ENCODE measurements at regions of chr1 and their contacts with region 1.

Region 1: DNA sequence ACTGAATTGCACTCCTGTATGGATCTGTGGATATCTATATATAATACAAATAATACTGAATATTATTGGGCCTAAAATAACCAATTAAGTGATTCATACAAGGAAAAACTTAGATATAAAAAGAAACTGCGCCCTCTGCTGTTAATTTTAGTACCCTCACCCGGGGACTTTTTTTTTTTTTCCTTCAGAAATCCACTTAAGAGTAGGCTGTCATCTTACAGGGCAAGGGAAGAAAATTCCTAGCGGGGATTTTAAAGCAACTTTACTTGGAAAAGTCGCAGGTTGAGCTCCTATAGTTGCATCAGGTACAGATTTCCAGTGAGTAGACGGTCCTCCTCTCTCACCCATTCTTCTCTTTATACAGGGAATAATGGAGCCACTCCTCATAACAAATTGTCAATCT is 1.3 kb downstream of the NTNG1 start:
- DNase-seq: no peak
- H3K4me3 ChIP-seq: peak overlapping the region; percentile 77 to 85 (median 82); a peak in 7 of 8 replicates
- H3K27ac ChIP-seq: no peak overlapping the region
- H3K4me1 ChIP-seq: peaks cover 0 to 4% (median 0%) of the 10 kb centered on the region in 4 experiments; a peak in 2 of 7 replicates
- H3K27me3 ChIP-seq: no peaks in the 10 kb centered on the region; a peak in 3 of 7 replicates
- CTCF ChIP-seq: peak in 2 of 3 experiments; percentile 24 to 32; a peak in 2 of 4 replicates
- EP300 ChIP-seq: no peak
- POLR2A ChIP-seq: no peak
- RAD21 ChIP-seq: peak; percentile 25 to 39; a peak in 3 of 4 replicates

Region 2: DNA sequence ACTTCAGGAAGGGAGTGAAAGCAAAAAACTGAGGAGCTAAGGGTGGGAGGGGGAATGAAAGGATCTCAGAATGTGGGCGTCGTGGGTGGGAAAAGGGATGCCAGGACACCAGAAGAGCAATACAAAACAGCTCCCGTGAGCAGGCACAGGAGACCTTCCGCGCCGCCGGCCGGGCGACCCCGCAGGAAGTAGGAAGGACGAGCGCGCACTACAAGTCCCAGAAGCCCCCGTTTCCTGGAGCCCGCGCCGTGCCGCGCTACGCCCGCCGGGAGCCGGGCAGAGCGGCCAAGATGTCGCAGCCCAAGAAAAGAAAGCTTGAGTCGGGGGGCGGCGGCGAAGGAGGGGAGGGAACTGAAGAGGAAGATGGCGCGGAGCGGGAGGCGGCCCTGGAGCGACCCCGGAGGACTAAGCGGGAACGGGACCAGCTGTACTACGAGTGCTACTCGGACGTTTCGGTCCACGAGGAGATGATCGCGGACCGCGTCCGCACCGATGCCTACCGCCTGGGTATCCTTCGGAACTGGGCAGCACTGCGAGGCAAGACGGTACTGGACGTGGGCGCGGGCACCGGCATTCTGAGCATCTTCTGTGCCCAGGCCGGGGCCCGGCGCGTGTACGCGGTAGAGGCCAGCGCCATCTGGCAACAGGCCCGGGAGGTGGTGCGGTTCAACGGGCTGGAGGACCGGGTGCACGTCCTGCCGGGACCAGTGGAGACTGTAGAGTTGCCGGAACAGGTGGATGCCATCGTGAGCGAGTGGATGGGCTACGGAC is 85.5 kb before region 1 on chr1 and contains the start of gene PRMT6:
- CTCF ChIA-PET with region 1: interaction called, 6 read pairs
- POLR2A ChIA-PET with region 1: interaction called, 11 read pairs
- DNase-seq: peak; percentile 70 to 88
- H3K4me3 ChIP-seq: peak within 1 kb of the TSS; percentile 85 to 98 (median 96)
- H3K27ac ChIP-seq: peak within 1 kb of the TSS; percentile 88
- H3K4me1 ChIP-seq: peaks cover 0 to 8% (median 0%) of the 10 kb centered on the region in 4 experiments; a peak in 2 of 7 replicates
- H3K27me3 ChIP-seq: no peaks in the 10 kb centered on the region
- CTCF ChIP-seq: peak in 1 of 3 experiments; percentile 10; a peak in 1 of 4 replicates
- EP300 ChIP-seq: no peak
- POLR2A ChIP-seq: peak; percentile 82 to 93
- RAD21 ChIP-seq: no peak
- total RNA-seq, gene PRMT6: 38.2 and 38.4 TPM in 2 replicates

Region 3: GRCh38 chr1:107162745-107163144 is 20.6 kb after region 1 on chr1:
- CTCF ChIA-PET with region 1: interaction called, 12 read pairs
- POLR2A ChIA-PET with region 1: no interaction called
- DNase-seq: no peak
- H3K4me3 ChIP-seq: no peak overlapping the region
- H3K27ac ChIP-seq: no peak overlapping the region
- H3K4me1 ChIP-seq: no peaks in the 10 kb centered on the region
- H3K27me3 ChIP-seq: no peaks in the 10 kb centered on the region
- CTCF ChIP-seq: no peak
- EP300 ChIP-seq: no peak
- POLR2A ChIP-seq: no peak
- RAD21 ChIP-seq: no peak

Region 4: DNA sequence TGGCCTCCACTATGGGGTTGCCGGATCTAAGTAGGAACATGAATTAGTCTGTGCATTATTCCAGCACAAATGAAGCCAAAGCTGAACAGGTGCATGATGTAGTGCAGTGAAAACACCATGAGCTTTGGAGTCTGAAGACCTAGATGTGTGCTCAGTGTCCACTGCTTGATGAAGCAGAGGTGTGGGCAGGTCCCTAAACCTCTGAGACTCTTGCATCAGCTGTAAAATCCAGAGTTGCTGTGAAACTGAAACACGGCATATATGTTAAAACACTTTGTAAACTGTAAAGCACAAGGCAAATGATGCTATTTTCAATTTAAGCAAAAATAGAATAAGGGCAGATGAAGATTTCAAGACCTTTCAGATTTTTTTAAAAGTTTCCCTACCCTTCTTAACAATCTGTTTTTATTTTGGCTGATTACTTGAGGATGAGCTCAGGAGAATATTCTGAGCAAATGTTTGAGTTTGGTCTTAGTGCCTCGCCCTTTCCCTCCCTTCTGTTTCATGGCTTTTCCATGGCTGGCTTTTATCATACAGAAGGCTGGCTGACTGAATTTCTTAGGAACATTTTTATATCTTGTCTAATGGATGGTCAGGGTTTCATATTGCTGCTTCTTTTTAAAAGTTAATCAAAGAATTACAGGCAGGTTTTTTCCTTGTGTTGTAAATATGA is 220.5 kb after region 1 on chr1:
- CTCF ChIA-PET with region 1: no interaction called
- POLR2A ChIA-PET with region 1: no interaction called
- DNase-seq: no peak
- H3K4me3 ChIP-seq: no peak overlapping the region
- H3K27ac ChIP-seq: no peak overlapping the region
- H3K4me1 ChIP-seq: peaks cover 0 to 4% (median 3%) of the 10 kb centered on the region in 4 experiments; a peak in 1 of 7 replicates
- H3K27me3 ChIP-seq: no peaks in the 10 kb centered on the region
- CTCF ChIP-seq: no peak
- EP300 ChIP-seq: no peak
- POLR2A ChIP-seq: no peak
- RAD21 ChIP-seq: no peak

Measured in H1 (cell line).